KBM-7 (cell line): ENCODE measurements at regions of chr4 and their contacts with region 1.

Region 1: DNA sequence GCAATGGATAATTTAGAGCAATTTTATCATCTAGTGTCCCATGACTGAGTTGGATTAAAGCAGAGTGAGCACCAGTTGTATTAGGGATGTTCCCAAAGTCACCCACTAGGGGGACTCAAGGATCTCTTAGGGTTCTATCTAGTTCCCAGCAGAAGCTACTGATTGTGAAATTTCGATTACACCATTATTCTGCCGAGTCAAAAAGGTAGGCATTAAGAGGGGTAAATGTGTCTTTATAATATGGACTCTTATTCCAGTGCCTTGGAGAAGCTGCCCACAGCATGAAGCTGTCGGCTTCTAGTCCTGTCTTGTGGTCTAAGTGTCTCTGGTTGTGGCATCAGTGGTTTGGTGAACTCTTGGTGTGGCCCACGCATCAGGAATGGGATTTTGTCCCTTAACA is 53.3 kb downstream of the RGS12 start:
- DNase-seq: peak; percentile 75

Region 2: GRCh38 chr4:3436798-3437581 is 90.8 kb after region 1 on chr4:
- in situ Hi-C with region 1: loop called (anchors 10 kb)
- DNase-seq: no peak

Region 3: GRCh38 chr4:3563403-3563802 is 217.3 kb after region 1 on chr4:
- in situ Hi-C with region 1: no loop called
- DNase-seq: no peak